ENCODE measurements at regions of chr6 and their contacts with region 1.

Region 1: GRCh38 chr6:131694831-131695426 is 6.3 kb downstream of the OR2A4 start:
- DNase-seq: no peak
- H3K4me3 ChIP-seq: no peak overlapping the region
- H3K27ac ChIP-seq: no peak overlapping the region
- H3K4me1 ChIP-seq: no peaks in the 10 kb centered on the region
- H3K27me3 ChIP-seq: no peaks in the 10 kb centered on the region
- CTCF ChIP-seq: peak in 5 of 6 experiments; percentile 55 to 66 (median 62)
- POLR2A ChIP-seq: no peak

Region 2: DNA sequence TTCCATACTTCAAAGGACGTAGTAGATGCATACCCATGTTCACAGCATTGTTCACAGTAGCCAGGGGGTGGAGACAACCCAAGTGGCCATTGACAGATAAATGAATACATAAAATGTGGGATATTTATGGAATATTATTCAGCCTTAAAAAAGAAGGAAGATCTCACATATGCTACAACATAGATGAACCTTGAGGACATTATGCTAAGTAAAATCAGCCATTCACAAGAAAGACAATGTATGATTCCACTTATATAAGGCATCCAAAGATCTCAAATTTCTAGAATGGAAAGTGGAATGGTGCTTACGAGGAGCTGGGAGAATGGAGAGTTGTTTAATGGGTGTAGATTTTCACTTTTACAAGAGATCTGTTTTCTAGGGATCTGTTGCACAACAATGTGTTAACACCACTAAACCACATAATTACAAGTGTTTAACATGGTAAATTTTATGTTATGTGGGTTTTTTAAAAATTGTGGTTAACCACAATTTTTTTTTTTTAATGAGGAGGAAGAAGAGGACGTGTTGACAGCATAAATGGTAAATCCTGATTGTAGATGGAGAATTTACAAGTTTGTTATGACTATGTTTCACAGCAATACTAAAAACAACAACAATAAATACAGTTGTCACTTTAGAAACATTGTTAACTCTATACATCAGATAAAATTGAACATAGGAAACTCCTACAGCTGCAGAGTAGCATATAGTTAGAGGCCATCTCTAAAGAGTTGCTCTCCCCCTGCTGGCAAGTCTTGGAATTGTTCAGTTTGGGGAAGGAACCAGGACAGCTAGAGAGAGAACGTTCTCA is 214.7 kb after region 1 on chr6:
- intact Hi-C with region 1: loop called (anchors 10 kb)
- DNase-seq: no peak
- H3K4me3 ChIP-seq: no peak overlapping the region
- H3K27ac ChIP-seq: no peak overlapping the region
- H3K4me1 ChIP-seq: no peaks in the 10 kb centered on the region
- H3K27me3 ChIP-seq: peaks cover 0 to 30% (median 0%) of the 10 kb centered on the region in 4 donors
- CTCF ChIP-seq: peak; percentile 65 to 89 (median 80)
- POLR2A ChIP-seq: no peak

Region 3: DNA sequence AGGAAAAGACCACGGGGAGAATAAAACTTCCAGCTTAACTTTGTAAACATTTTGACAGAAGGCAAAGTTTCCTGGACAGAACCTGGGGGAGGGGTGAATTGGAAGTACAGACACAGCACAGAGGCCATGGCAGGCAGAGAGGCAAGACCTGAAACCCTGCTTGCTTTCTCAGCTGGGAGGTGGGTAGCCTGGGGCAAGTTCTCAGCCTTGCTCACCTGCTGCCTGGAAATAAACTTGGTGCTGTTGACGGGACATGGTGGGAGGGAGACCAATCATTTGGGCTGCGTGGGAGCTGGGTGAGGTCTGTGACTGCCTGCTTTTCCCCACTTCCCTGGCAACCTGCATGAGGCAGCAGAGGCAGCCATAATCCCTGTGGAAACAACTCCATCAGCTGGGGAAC is 485.0 kb after region 1 on chr6:
- intact Hi-C with region 1: no loop called
- DNase-seq: no peak
- H3K4me3 ChIP-seq: no peak overlapping the region
- H3K27ac ChIP-seq: no peak overlapping the region
- H3K4me1 ChIP-seq: no peaks in the 10 kb centered on the region
- H3K27me3 ChIP-seq: no peaks in the 10 kb centered on the region
- CTCF ChIP-seq: no peak
- POLR2A ChIP-seq: no peak

Measured in esophagus squamous epithelium (tissue), 5 donors.